ENCODE measurements at regions of chr21 and their contacts with region 1.

Region 1: DNA sequence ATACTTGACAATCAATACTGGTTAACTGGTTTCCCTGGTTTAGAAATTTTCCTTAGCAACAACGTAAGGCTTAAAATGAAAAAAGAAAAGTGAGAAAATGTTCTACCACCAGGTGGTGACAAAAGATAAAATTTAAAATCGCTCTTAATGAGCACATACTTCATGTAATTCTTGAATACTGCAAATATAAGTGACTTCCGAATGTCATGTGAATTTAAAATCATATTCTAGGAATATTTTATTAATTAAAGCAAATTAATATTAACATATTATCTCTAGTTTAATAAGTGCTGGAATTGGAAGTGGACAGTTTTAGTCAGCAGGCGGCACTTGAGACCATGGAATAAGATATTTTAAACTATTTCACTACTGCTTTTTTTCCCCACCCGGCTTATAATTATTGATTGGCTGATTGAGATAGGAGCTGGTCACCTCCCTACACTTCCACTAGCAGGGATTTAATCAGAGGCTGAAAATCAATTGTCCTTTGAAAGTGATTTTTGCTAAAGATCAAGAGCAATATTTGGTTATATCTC is 5.0 kb upstream of the ADAMTS1 start:
- DNase-seq: no peak
- ATAC-seq: no peak

Region 2: GRCh38 chr21:27213303-27213702 is 363.1 kb after region 1 on chr21:
- intact Hi-C with region 1: no loop called
- DNase-seq: no peak
- ATAC-seq: no peak

Region 3: GRCh38 chr21:27564684-27565301 is 714.6 kb after region 1 on chr21:
- intact Hi-C with region 1: loop called (anchors 5 to 10 kb)
- DNase-seq: peak; percentile 37
- ATAC-seq: peak; percentile 61 to 70

Region 4: GRCh38 chr21:27693376-27693775 is 843.2 kb after region 1 on chr21:
- intact Hi-C with region 1: loop called in 1 of 2 experiments (anchors 5 kb)
- DNase-seq: no peak
- ATAC-seq: no peak

Region 5: DNA sequence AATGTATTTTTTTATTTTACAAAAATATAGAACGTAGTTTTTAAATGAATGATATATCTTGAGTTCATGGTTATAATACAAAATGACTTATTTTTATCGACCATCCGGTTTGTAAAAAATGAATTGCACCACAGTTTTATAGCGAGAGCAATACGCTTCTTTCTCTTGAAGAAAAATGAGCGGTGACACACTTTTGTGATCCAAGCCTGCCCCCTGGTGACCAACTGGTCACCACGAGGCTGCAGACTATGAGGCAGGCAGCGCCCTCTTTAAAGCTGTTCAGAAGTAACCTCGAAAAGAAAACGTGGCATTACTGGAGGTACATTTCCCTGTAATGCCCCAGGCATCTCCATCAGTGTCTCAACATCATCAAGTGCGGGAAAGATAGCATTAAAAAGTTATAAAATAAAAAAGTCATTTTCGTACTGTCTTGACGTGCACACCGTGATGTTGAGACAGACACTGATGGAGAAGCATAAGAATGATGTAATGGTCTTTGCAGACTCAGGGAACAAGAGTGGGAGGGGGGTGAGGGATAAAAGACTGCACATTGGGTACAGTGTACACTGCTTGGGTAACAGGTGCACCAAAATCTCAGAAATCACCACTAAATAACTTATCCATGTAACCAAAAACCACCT is 850.9 kb after region 1 on chr21:
- intact Hi-C with region 1: loop called (anchors 1 to 5 kb)
- DNase-seq: peak; percentile 89
- ATAC-seq: peak; percentile 88 to 91

Region 6: DNA sequence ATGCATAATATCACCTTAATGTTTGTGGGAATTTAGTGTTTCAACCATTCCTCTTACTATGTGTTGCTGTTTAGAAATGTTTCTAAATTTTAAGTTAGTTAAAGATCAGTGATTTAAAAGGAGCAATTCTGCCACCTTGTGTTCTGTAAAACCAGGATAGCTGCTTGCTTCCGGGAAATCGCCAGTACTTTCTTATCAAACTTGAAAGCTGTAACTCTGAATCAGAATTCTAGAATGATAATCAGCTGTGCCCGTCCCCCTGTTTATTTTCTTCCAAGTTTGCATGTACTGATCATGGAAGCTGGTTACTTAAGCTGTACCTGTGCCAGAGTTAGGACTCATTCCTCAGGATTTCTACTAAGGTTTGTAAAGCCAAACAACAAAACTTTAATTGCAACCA is 1486.1 kb after region 1 on chr21:
- intact Hi-C with region 1: loop called in 1 of 2 experiments (anchors 5 kb)
- DNase-seq: peak; percentile 24
- ATAC-seq: peak; percentile 36 to 42

Measured in left cardiac atrium (tissue), 4 donors.